CD4-positive, alpha-beta memory T cell (primary cell): ENCODE measurements at regions of chr4 and their contacts with region 1.

Region 1: DNA sequence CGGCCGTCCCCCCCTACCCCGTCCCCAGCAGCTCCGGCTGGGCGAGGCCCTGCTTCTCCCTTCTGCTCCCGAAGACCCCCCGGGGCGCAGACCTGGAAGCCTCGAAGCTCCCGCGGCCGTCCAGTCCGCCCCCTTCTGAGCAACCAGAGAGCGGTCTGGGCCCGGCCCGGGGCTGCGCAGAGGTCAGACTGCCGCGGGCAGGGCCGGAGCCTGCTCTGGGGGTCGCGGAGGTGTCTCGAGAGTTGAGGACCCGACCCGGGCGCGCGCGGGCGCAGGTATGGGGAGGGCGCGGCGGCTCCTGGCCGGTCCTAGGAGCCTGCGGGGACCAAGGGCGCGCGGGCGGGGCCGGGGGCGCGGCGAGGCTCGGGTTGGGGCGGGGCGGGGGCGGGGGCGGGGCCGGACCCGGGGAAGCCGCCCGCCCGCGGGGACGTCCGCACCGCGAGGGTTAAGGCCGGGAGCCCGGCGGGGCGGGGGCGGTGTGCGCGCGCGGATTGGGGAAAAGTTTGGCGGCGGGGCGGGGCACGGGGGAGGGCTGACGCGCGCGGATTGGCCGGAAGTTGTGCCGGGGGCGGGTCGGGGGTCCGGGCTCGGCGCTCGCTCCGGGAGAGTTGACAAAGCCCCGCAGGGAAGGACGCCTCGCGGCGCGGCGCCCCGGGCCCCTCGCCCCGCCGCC is at the start of gene FGFRL1:
- DNase-seq: peak; percentile 86 to 90 (median 87)
- H3K4me3 ChIP-seq: peak within 1 kb of the TSS; percentile 22 to 75
- H3K4me3 Mint-ChIP-seq: peak within 1 kb of the TSS; percentile 85 to 94 (median 90)
- H3K27ac ChIP-seq: peak within 1 kb of the TSS; percentile 76
- H3K27ac Mint-ChIP-seq: peak within 1 kb of the TSS; percentile 94 to 98 (median 97)
- H3K4me1 ChIP-seq: peaks cover 25% of the 10 kb centered on the region
- H3K4me1 Mint-ChIP-seq: peaks cover 6 to 17% (median 13%) of the 10 kb centered on the region in 4 donors
- H3K27me3 ChIP-seq: peaks cover 7% of the 10 kb centered on the region
- H3K27me3 Mint-ChIP-seq: peaks cover 14 to 23% of the 10 kb centered on the region in 2 donors
- total RNA-seq, gene FGFRL1: 22.4 TPM

Region 2: GRCh38 chr4:973431-974397 is 37.4 kb before region 1 on chr4 and contains the start of gene DGKQ:
- CTCF ChIA-PET with region 1: no interaction called
- POLR2A ChIA-PET with region 1: interaction called, 11 read pairs
- intact Hi-C with region 1: loop called (anchors 1 kb)
- DNase-seq: peak; percentile 78 to 88 (median 83)
- H3K4me3 ChIP-seq: peak within 1 kb of the TSS; percentile 36 to 57
- H3K4me3 Mint-ChIP-seq: peak within 1 kb of the TSS; percentile 34 to 76 (median 52)
- H3K27ac ChIP-seq: peak within 1 kb of the TSS; percentile 51
- H3K27ac Mint-ChIP-seq: peak within 1 kb of the TSS in 1 of 7 donors; percentile 60
- H3K4me1 ChIP-seq: peaks cover 24% of the 10 kb centered on the region
- H3K4me1 Mint-ChIP-seq: peaks cover 0 to 13% (median 3%) of the 10 kb centered on the region in 4 donors
- H3K27me3 ChIP-seq: no peaks in the 10 kb centered on the region
- H3K27me3 Mint-ChIP-seq: no peaks in the 10 kb centered on the region
- total RNA-seq, gene DGKQ: 25.9 to 29.6 TPM

Region 3: GRCh38 chr4:986879-987623 is 24.1 kb before region 1 on chr4 and contains the start of gene IDUA:
- CTCF ChIA-PET with region 1: no interaction called
- POLR2A ChIA-PET with region 1: interaction called, 19 read pairs
- intact Hi-C with region 1: loop called (anchors 2 kb)
- DNase-seq: peak; percentile 79 to 84 (median 82)
- H3K4me3 ChIP-seq: peak within 1 kb of the TSS; percentile 76 to 83
- H3K4me3 Mint-ChIP-seq: peak within 1 kb of the TSS; percentile 88 to 95 (median 90)
- H3K27ac ChIP-seq: peak within 1 kb of the TSS; percentile 60
- H3K27ac Mint-ChIP-seq: peak within 1 kb of the TSS; percentile 40 to 92 (median 83)
- H3K4me1 ChIP-seq: peaks cover 34% of the 10 kb centered on the region
- H3K4me1 Mint-ChIP-seq: peaks cover 8 to 35% (median 15%) of the 10 kb centered on the region in 4 donors
- H3K27me3 ChIP-seq: no peaks in the 10 kb centered on the region
- H3K27me3 Mint-ChIP-seq: no peaks in the 10 kb centered on the region
- total RNA-seq, gene IDUA: 63.0 to 64.1 TPM

Region 4: GRCh38 chr4:1055721-1056590 is 44.8 kb after region 1 on chr4:
- CTCF ChIA-PET with region 1: no interaction called
- POLR2A ChIA-PET with region 1: interaction called, 12 read pairs
- intact Hi-C with region 1: loop called (anchors 1 kb)
- DNase-seq: peak; percentile 87 to 93 (median 90)
- H3K4me3 ChIP-seq: peak overlapping the region; percentile 53 to 73
- H3K4me3 Mint-ChIP-seq: peak overlapping the region; percentile 61 to 85 (median 80)
- H3K27ac ChIP-seq: peak overlapping the region; percentile 28
- H3K27ac Mint-ChIP-seq: peak overlapping the region; percentile 66 to 97 (median 92)
- H3K4me1 ChIP-seq: peaks cover 13% of the 10 kb centered on the region
- H3K4me1 Mint-ChIP-seq: peaks cover 5 to 15% (median 8%) of the 10 kb centered on the region in 4 donors
- H3K27me3 ChIP-seq: peaks cover 1% of the 10 kb centered on the region
- H3K27me3 Mint-ChIP-seq: peaks cover 0 to 15% of the 10 kb centered on the region in 2 donors

Region 5: GRCh38 chr4:1592709-1593417 is 581.7 kb after region 1 on chr4:
- CTCF ChIA-PET with region 1: no interaction called
- POLR2A ChIA-PET with region 1: no interaction called
- intact Hi-C with region 1: no loop called
- DNase-seq: peak in 1 of 5 donors; percentile 24
- H3K4me3 ChIP-seq: no peak overlapping the region
- H3K4me3 Mint-ChIP-seq: no peak overlapping the region
- H3K27ac ChIP-seq: no peak overlapping the region
- H3K27ac Mint-ChIP-seq: no peak overlapping the region
- H3K4me1 ChIP-seq: no peaks in the 10 kb centered on the region
- H3K4me1 Mint-ChIP-seq: no peaks in the 10 kb centered on the region
- H3K27me3 ChIP-seq: no peaks in the 10 kb centered on the region
- H3K27me3 Mint-ChIP-seq: peaks cover 2 to 7% of the 10 kb centered on the region in 2 donors